HEK293T (cell line): ENCODE measurements at regions of chr11 and their contacts with region 1.

Region 1: GRCh38 chr11:2532704-2533586 is 88.1 kb downstream of the KCNQ1 start:
- DNase-seq: peak; percentile 85

Region 2: GRCh38 chr11:2428322-2428795 is 104.6 kb before region 1 on chr11:
- CTCF ChIA-PET with region 1: interaction called, 29 read pairs
- POLR2A ChIA-PET with region 1: no interaction called
- DNase-seq: peak; percentile 68

Region 3: GRCh38 chr11:2885676-2886081 is 352.7 kb after region 1 on chr11 and contains the start of gene CDKN1C:
- CTCF ChIA-PET with region 1: interaction called, 146 read pairs
- POLR2A ChIA-PET with region 1: interaction called, 7 read pairs
- DNase-seq: peak; percentile 84

Region 4: DNA sequence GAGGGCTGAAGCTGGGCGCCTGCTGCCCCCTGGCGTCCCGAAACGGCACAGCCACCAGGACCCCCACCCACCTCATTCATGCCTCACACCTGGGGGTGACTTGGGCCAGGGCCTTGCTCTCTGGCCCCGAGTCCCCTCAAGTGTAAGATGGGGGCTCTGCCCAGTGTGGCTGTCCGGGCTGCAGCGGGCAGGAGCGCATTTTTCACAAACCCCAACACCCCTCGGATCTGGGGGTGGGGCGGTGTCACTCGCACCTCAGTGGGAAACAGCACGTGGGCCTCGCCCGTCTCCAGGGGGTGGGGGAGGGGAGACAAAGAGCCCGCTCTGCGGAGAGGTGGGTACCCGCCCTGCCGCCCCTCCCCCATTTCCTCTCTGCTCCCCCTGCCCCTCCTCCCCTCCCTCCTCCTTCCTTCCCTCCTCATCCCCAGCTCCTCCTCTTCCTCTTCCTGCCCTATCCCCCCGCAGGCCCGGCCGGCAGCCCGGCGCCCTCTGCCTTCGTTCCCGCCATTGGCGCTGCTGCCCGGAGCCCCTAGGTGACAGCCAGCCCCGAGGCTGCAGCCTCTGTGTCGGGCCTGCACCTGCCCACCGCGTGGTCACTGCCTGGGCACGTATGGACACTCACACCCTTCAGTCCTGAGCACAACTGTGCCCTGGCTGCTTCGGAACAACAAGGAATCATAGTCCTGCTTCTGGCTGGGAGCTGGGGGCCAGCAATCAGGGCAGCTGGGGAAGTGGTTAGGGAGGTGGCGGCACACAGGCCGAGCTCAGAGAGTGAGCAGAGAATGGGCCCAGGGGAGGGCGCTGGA is 359.5 kb after region 1 on chr11:
- CTCF ChIA-PET with region 1: interaction called, 146 read pairs
- POLR2A ChIA-PET with region 1: interaction called, 24 read pairs
- DNase-seq: peak; percentile 81